AG04450 (cell line): ENCODE measurements at regions of chr5 and their contacts with region 1.

Region 1: GRCh38 chr5:84791138-84791537 is 406.5 kb upstream of the EDIL3 start:
- DNase-seq: no peak
- H3K4me3 ChIP-seq: no peak overlapping the region
- H3K27ac ChIP-seq: no peak overlapping the region
- H3K27me3 ChIP-seq: no peaks in the 10 kb centered on the region
- CTCF ChIP-seq: no peak

Region 2: DNA sequence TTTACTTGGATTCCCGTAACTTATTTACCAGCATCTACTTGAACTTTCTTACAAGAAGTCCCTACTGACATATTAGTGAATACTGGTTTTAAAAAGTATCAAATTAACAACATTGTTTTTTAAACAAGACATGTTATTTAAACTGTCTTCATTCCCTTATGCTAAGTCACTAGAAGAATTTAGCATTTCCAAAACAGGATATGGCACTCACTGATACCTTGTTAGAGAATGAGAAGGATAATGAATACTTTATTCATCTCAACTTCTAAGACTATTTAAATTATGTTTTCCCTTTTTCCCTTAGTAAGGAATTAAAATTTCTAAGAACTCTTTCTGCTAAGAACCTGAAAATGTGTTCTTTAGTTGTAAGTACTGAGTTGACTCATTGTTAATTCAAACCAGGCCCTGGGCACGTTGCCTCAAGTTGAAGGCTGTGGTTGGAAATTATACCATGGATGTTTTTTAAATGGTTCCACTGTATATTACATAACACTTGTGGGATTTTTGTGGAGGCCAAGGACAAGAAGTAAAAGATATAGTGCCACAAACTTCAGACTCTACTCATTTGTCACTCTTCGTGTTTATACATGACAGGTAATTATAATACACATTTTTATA is 187.5 kb before region 1 on chr5:
- CTCF ChIA-PET with region 1: no interaction called
- POLR2A ChIA-PET with region 1: interaction called, 12 read pairs
- DNase-seq: peak; percentile 74
- H3K4me3 ChIP-seq: no peak overlapping the region
- H3K27ac ChIP-seq: no peak overlapping the region
- H3K27me3 ChIP-seq: no peaks in the 10 kb centered on the region
- CTCF ChIP-seq: no peak

Region 3: DNA sequence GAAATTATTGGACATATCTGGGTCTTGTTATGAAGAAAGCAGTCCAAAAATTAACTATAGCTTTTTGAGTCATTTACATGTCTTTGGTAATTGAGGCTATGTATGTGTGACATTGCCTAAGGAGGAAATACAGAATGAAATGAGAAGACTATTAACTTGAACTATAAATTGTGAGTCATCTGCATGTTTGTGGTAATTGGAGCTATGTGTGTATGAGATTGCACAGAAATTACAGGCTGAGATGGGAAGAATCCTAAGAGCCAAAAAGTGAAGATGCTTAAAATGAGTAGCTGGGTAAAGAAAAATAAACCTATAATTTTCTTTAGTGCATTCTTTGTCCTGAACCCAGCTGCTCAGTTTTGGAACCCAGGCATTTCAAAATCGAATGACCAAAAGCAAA is 341.1 kb after region 1 on chr5:
- CTCF ChIA-PET with region 1: no interaction called
- POLR2A ChIA-PET with region 1: no interaction called
- DNase-seq: peak; percentile 21
- H3K4me3 ChIP-seq: no peak overlapping the region
- H3K27ac ChIP-seq: no peak overlapping the region
- H3K27me3 ChIP-seq: no peaks in the 10 kb centered on the region
- CTCF ChIP-seq: no peak